BJ (cell line): ENCODE measurements at regions of chr1 and their contacts with region 1.

Region 1: GRCh38 chr1:153977250-153978240 is at the start of gene JTB:
- DNase-seq: no peak
- H3K4me3 ChIP-seq: peak within 1 kb of the TSS; percentile 89
- H3K27me3 ChIP-seq: no peaks in the 10 kb centered on the region
- CTCF ChIP-seq: no peak
- polyA plus RNA-seq, gene JTB: 189 and 227 TPM in 2 replicates

Region 2: DNA sequence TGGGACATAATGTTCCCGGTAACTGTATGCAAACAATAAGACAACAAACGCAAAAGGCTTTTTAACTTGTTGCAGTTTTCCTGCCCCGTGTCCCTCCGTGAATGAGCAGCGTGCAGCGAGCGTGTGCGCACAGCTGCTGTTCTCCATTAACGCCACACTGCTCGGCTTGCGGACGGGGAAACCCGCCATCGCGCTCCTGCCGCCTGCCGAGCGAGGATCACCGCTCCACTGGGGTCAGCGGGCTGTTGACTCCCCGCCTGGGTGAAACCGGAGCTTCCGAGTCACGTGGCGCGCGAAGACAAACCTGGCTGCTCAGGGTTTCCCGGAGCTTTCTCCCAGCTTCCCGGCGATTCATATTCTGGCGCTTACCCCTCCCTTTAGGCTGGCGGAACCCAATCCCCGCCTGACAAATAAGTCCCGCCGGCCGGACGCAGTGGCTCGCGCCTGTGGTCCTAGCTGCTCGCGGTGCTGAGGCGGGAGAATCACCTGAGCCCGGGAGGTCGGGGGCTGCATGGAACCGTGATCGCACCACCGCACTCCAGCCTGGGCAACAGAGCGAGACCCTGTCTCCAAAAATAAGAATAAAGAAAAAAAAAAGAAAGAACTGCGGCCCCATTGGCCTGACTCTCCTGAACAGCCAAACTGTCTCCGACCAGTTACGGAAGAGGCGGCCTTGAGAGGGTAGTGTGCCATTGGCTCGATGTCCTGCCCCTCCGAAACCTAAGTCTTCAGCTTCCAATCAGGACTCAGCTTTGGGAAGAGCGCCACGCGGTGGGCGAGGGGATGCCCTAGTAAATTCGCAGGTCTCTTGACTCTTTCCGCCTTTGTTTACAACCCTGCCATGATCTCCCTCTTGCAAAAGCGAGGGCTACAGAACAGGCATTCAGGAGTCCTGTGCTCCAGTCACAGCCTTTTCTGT is 10.2 kb before region 1 on chr1 and contains the start of gene CREB3L4:
- CTCF ChIA-PET with region 1: interaction called, 32 read pairs
- POLR2A ChIA-PET with region 1: interaction called, 17 read pairs
- DNase-seq: peak; percentile 88
- H3K4me3 ChIP-seq: peak within 1 kb of the TSS; percentile 53
- H3K27me3 ChIP-seq: no peaks in the 10 kb centered on the region
- CTCF ChIP-seq: peak; percentile 58
- polyA plus RNA-seq, gene CREB3L4: 8.0 and 8.7 TPM in 2 replicates